ENCODE measurements at regions of chr6 and their contacts with region 1.

Region 1: DNA sequence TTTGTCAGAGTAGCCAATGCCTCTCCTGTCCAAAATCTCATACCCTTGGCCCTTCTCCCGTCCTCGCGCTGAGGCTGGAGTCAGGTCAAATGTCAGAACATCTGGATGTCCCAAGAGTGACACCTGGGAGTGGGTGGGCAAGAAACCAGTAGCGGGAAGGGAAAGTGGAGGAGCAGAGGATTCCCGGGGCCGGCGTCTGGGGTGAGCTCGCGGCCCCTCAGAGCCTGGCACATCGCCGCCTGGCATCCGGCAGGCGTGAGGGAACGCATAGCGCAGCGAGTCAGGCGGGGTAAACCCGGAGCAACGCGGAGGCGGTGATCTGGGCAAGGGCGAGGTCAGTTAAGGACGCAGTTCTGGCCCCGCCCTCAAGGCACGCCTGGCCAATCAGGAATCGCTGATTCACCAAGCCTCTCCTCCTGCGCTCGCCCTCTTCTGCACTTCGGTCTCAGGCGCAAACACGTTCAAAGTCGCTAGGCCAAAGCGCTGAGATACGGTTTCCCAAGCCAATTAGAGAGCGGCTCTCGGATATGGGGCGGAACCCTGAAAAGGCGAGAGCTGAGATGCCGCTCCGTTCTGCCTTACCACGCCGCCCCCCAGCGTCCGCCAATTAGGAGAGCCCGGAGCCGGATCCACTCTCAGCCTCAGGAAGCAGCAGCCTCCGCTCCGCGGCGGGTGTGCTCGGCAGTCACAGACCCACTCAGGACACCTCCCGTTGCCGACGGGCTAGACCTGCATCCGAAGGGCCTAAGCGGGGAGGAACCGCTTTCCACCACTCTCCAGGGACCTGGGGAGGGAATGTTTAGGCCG is 22.5 kb downstream of the VPS52 start:
- DNase-seq: peak; percentile 93
- H3K27ac ChIP-seq: peak overlapping the region; percentile 99
- CTCF ChIP-seq: no peak

Region 2: DNA sequence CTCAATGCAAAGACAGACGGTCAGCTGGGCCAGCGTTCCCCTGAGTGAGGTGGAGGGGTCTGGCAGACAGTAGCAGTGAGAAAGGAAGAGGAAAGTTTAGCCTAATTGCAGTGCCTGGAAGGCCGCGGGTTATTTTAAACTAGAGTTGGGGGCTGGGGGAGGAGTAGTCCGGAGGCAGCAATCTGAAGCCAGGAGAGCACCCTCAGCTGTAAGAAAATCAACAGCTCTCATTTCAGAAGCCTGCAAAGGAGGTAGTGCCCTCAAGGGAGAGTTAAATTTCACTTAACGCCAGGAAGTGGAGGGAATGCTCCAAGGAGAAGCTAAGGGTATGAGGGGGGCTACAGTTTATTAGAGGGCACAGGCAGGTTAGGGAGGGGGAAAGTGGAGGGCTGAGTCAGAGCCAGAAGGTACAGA is 13.9 kb before region 1 on chr6:
- CTCF ChIA-PET with region 1: interaction called, 15 read pairs
- POLR2A ChIA-PET with region 1: no interaction called
- DNase-seq: no peak
- H3K27ac ChIP-seq: no peak overlapping the region
- CTCF ChIP-seq: no peak

Region 3: GRCh38 chr6:33264015-33264414 is 14.9 kb after region 1 on chr6:
- CTCF ChIA-PET with region 1: no interaction called
- POLR2A ChIA-PET with region 1: no interaction called
- DNase-seq: no peak
- H3K27ac ChIP-seq: peak overlapping the region; percentile 18
- CTCF ChIP-seq: no peak

Measured in RWPE1 (cell line).